ENCODE measurements at regions of chr9 and their contacts with region 1.

Region 1: DNA sequence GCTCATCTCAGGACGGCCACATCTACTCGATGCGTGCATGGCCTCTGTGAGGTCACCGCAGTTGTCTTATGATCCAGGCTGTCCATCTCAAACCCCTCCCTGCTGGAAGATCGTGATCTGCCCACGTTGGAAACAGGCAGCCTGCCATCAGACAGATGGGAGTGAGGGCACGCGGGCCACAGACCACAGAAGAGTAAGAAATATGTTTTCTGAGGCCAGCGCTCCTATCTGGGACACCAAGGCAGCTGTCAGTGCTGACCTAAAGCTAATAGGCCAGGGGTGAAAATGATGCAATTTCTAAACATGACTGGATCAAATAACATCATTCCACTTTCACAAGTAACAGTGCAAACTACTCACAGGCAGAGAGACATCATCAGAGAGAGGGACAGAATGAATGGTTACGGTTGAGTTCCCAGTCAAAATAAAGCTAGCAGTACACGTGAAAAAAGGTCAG is 57.1 kb upstream of the CER1 start:
- DNase-seq: peak; percentile 12
- H3K4me3 Mint-ChIP-seq: no peak overlapping the region
- H3K27ac Mint-ChIP-seq: no peak overlapping the region
- H3K4me1 Mint-ChIP-seq: no peaks in the 10 kb centered on the region
- H3K27me3 Mint-ChIP-seq: peaks cover 55% of the 10 kb centered on the region
- CTCF ChIP-seq: no peak

Region 2: GRCh38 chr9:14677406-14677805 is 102.2 kb before region 1 on chr9:
- CTCF ChIA-PET with region 1: no interaction called
- POLR2A ChIA-PET with region 1: no interaction called
- intact Hi-C with region 1: no loop called
- DNase-seq: no peak
- H3K4me3 Mint-ChIP-seq: no peak overlapping the region
- H3K27ac Mint-ChIP-seq: no peak overlapping the region
- H3K4me1 Mint-ChIP-seq: no peaks in the 10 kb centered on the region
- H3K27me3 Mint-ChIP-seq: no peaks in the 10 kb centered on the region
- CTCF ChIP-seq: no peak

Region 3: GRCh38 chr9:14797435-14797834 is 17.8 kb after region 1 on chr9:
- CTCF ChIA-PET with region 1: no interaction called
- POLR2A ChIA-PET with region 1: interaction called, 3 read pairs
- intact Hi-C with region 1: loop called (anchors 2 kb)
- DNase-seq: peak; percentile 39
- H3K4me3 Mint-ChIP-seq: no peak overlapping the region
- H3K27ac Mint-ChIP-seq: no peak overlapping the region
- H3K4me1 Mint-ChIP-seq: no peaks in the 10 kb centered on the region
- H3K27me3 Mint-ChIP-seq: peaks cover 28% of the 10 kb centered on the region
- CTCF ChIP-seq: no peak